Activated naive CD4-positive, alpha-beta T cell treated with anti-CD3 and anti-CD28 coated beads for 36 hours (primary cell): ENCODE measurements at regions of chr3 and their contacts with region 1.

Region 1: DNA sequence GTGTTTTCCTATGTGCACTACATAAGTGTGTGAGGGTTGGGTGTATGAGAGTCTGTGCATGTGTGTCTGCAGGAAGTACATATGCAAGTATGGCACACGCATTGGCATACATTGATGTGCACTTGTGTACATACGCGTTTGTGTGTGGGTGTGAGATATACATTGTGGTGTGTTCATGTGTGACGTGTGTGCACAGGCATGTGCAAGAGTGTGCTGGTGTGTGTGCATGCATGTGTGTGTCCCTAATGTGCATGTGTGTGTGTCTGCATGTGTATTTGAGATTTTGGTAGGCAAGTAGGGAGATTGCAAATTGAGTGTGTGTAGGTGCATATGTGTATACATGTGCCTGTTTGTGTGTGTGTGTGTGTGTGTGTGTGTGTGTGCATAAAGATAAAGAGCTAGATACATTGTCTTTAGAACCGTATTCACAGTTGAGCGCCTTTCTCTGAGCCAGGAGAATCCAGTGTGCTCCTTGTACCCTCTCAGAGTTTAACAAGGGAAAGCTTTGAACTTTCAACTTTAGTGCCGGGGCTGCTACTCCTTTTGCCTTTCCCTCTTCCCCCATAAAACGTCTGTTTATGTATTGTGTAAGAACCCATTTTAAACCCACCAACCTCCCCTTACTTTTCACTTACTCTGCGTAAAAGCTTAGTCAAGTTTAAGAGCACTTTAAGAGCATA is 152.4 kb upstream of the CHL1 start:
- DNase-seq: no peak
- H3K4me3 Mint-ChIP-seq: no peak overlapping the region
- H3K27ac Mint-ChIP-seq: no peak overlapping the region
- H3K4me1 Mint-ChIP-seq: no peaks in the 10 kb centered on the region
- H3K27me3 Mint-ChIP-seq: peaks cover 17% of the 10 kb centered on the region

Region 2: GRCh38 chr3:20421-20820 is 23.7 kb before region 1 on chr3:
- CTCF ChIA-PET with region 1: no interaction called
- intact Hi-C with region 1: no loop called
- DNase-seq: no peak
- H3K4me3 Mint-ChIP-seq: no peak overlapping the region
- H3K27ac Mint-ChIP-seq: no peak overlapping the region
- H3K4me1 Mint-ChIP-seq: no peaks in the 10 kb centered on the region
- H3K27me3 Mint-ChIP-seq: peaks cover 31% of the 10 kb centered on the region

Region 3: GRCh38 chr3:280691-281090 is 236.6 kb after region 1 on chr3:
- CTCF ChIA-PET with region 1: no interaction called
- intact Hi-C with region 1: no loop called
- DNase-seq: no peak
- H3K4me3 Mint-ChIP-seq: no peak overlapping the region
- H3K27ac Mint-ChIP-seq: no peak overlapping the region
- H3K4me1 Mint-ChIP-seq: no peaks in the 10 kb centered on the region
- H3K27me3 Mint-ChIP-seq: no peaks in the 10 kb centered on the region

Region 4: GRCh38 chr3:354432-354831 is 310.3 kb after region 1 on chr3:
- CTCF ChIA-PET with region 1: interaction called, 8 read pairs
- intact Hi-C with region 1: loop called (anchors 1 kb)
- DNase-seq: peak; percentile 39
- H3K4me3 Mint-ChIP-seq: no peak overlapping the region
- H3K27ac Mint-ChIP-seq: no peak overlapping the region
- H3K4me1 Mint-ChIP-seq: no peaks in the 10 kb centered on the region
- H3K27me3 Mint-ChIP-seq: no peaks in the 10 kb centered on the region

Region 5: GRCh38 chr3:377158-377561 is 333.0 kb after region 1 on chr3:
- CTCF ChIA-PET with region 1: no interaction called
- intact Hi-C with region 1: loop called (anchors 1 kb)
- DNase-seq: no peak
- H3K4me3 Mint-ChIP-seq: no peak overlapping the region
- H3K27ac Mint-ChIP-seq: no peak overlapping the region
- H3K4me1 Mint-ChIP-seq: no peaks in the 10 kb centered on the region
- H3K27me3 Mint-ChIP-seq: no peaks in the 10 kb centered on the region